Posterior cingulate gyrus (tissue), 11 donors: ENCODE measurements at regions of chr2 and their contacts with region 1.

Region 1: GRCh38 chr2:44291281-44292248 is 16.3 kb downstream of the SLC3A1 start:
- DNase-seq: peak in 7 of 10 donors; percentile 39 to 93 (median 55)

Region 2: GRCh38 chr2:44044281-44044720 is 247.3 kb before region 1 on chr2:
- intact Hi-C with region 1: loop called (anchors 1 kb)
- DNase-seq: peak; percentile 75 to 99 (median 90)

Region 3: DNA sequence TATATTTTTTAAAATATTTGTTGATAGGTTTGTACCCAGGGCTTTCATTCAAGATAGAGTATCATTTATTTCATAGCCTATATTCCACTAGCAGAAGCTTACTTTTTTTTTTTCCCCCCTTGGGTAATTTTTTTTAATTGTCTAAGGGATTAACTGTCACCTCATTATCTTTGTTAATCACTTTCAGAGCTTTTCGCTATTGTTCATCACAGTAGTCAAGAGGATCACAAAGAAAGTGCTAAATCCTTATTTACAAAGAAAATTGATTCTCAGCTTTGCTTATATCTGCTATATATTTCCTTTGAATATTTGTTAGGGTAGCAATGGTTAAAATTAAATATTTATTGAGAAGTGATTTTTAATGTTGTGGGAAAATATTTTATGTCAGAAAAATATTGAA is 129.2 kb after region 1 on chr2:
- intact Hi-C with region 1: no loop called
- DNase-seq: no peak